Activated CD4-positive, alpha-beta T cell treated with anti-CD3 and anti-CD28 coated beads for 36 hours (primary cell): ENCODE measurements at regions of chr3 and their contacts with region 1.

Region 1: DNA sequence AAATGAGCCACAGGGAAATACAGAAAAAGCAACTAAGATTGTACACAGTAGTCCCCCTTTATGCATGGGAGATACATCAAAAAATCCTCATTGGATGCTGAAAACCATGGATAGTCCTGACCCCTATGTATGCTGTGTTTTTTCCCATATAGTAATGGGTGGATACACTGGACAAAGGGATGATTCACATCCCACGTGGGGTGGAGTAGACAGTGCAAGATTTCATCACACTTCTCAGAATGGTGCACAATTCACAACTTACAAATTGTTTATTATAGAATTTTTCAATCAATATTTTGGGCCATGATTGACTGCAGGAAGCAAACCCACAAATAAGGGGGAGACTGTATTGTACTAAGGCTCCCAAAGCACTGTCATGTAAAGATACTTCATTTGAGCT is 224.4 kb upstream of the STRIT1 start:
- DNase-seq: no peak
- ATAC-seq: no peak
- H3K4me3 Mint-ChIP-seq: no peak overlapping the region
- H3K27ac Mint-ChIP-seq: no peak overlapping the region
- H3K4me1 Mint-ChIP-seq: no peaks in the 10 kb centered on the region
- H3K27me3 Mint-ChIP-seq: peaks cover 1% of the 10 kb centered on the region

Region 2: DNA sequence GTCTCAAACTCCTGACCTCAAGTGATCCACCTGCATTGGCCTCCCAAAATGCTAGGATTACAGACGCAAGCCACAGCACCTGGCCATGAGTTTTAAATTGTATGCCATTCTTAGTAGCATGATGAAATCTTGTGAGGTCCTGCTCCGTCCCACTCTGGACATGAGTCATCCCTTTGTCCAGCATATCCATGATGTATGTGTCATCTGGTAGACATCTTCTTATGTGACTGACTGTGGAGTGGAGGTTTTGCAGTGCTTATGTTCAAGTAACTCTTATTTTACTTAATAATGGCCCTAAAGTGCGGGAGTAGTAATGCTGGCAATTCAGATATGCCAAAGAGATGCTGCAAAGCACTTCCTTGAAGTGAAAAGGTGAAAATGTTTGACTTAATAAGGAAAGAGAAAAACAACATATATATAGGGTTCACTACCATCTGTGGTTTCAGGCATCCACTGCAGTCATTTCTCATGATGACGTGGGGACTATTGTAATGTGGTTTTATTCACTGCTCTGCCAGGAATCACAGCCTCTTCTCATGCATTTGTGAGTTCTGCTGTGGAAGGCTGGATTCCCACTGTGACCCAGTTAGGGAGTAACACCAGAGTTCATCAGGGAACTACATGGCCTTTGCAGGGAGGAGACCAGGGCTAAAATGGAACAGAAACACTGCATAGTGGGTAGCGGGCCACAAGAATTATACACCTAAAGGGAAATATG is 19.8 kb before region 1 on chr3:
- CTCF ChIA-PET with region 1: no interaction called
- POLR2A ChIA-PET with region 1: no interaction called
- intact Hi-C with region 1: loop called in 1 of 2 experiments (anchors 1 kb)
- DNase-seq: no peak
- ATAC-seq: peak; percentile 39
- H3K4me3 Mint-ChIP-seq: no peak overlapping the region
- H3K27ac Mint-ChIP-seq: no peak overlapping the region
- H3K4me1 Mint-ChIP-seq: peaks cover 9% of the 10 kb centered on the region
- H3K27me3 Mint-ChIP-seq: no peaks in the 10 kb centered on the region